HCT116 (cell line): ENCODE measurements at regions of chr10 and their contacts with region 1.

Region 1: DNA sequence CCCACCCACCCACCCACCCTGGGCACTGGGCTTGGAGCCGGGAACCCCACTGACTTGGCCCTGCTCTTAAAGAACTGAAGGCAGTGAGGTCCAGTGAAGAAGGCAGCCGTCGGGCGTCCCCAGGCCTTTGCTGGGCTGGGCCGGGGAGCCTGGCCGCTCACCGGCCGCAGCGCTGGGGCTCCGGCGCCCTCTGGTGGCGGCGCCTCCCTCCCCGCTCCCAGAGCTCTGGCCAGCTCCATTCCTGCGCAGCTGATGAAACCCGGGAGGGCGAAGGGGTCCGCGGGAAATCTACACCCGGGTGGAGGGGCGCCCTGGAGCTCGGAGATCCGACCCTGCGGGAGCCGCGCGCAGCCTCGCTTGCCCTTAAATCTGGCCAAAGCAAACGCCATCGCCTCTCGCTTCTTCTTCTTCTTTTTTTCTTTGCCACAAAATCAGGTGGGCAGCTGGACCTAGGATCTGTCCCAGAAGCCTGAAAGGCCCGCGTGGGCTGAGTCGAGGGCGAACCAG is 1.7 kb upstream of the CXCL12 start:
- DNase-seq: no peak
- ATAC-seq: peak; percentile 96
- H3K4me3 ChIP-seq: no peak overlapping the region
- H3K27ac ChIP-seq: no peak overlapping the region
- H3K4me1 ChIP-seq: no peaks in the 10 kb centered on the region
- H3K27me3 ChIP-seq: 0 out of 2 replicates have a peak, but pooled peaks cover 2% of the 10 kb centered on the region
- CTCF ChIP-seq: peak; percentile 62 to 93 (median 74)
- POLR2A ChIP-seq: no peak
- RAD21 ChIP-seq: peak; percentile 82

Region 2: GRCh38 chr10:43689955-43690771 is 696.4 kb before region 1 on chr10:
- CTCF ChIA-PET with region 1: interaction called, 10 read pairs
- POLR2A ChIA-PET with region 1: no interaction called
- RAD21 ChIA-PET with region 1: no interaction called
- intact Hi-C with region 1: no loop called
- DNase-seq: peak; percentile 29
- ATAC-seq: peak; percentile 99
- H3K4me3 ChIP-seq: no peak overlapping the region
- H3K27ac ChIP-seq: no peak overlapping the region
- H3K4me1 ChIP-seq: peaks cover 0 to 7% of the 10 kb centered on the region in 2 experiments; a peak in 1 of 4 replicates
- H3K27me3 ChIP-seq: 0 out of 2 replicates have a peak, but pooled peaks cover 18% of the 10 kb centered on the region
- CTCF ChIP-seq: peak; percentile 60 to 90 (median 77)
- POLR2A ChIP-seq: no peak
- RAD21 ChIP-seq: peak; percentile 70

Region 3: GRCh38 chr10:44857363-44858016 is 470.9 kb after region 1 on chr10:
- CTCF ChIA-PET with region 1: interaction called, 11 read pairs
- POLR2A ChIA-PET with region 1: no interaction called
- RAD21 ChIA-PET with region 1: interaction called in 1 of 2 experiments, 3 read pairs
- intact Hi-C with region 1: loop called (anchors 10 kb)
- DNase-seq: no peak
- ATAC-seq: peak; percentile 77
- H3K4me3 ChIP-seq: no peak overlapping the region
- H3K27ac ChIP-seq: no peak overlapping the region
- H3K4me1 ChIP-seq: no peaks in the 10 kb centered on the region
- H3K27me3 ChIP-seq: no peaks in the 10 kb centered on the region
- CTCF ChIP-seq: peak; percentile 41 to 99 (median 98); a peak in 5 of 6 replicates
- POLR2A ChIP-seq: no peak
- RAD21 ChIP-seq: peak; percentile 77

Region 4: GRCh38 chr10:44864637-44865288 is 478.2 kb after region 1 on chr10:
- CTCF ChIA-PET with region 1: interaction called, 3 read pairs
- POLR2A ChIA-PET with region 1: no interaction called
- RAD21 ChIA-PET with region 1: interaction called in 1 of 2 experiments, 3 read pairs
- intact Hi-C with region 1: loop called (anchors 10 kb)
- DNase-seq: peak; percentile 60
- ATAC-seq: peak; percentile 96
- H3K4me3 ChIP-seq: peak overlapping the region; percentile 40 to 51
- H3K27ac ChIP-seq: no peak overlapping the region; the same call in 1 of the 2 replicates
- H3K4me1 ChIP-seq: peaks cover 10 to 18% of the 10 kb centered on the region in 2 experiments
- H3K27me3 ChIP-seq: peaks cover 7% of the 10 kb centered on the region; the same call in 1 of the 2 replicates
- CTCF ChIP-seq: peak; percentile 82 to 98 (median 97)
- POLR2A ChIP-seq: no peak
- RAD21 ChIP-seq: peak; percentile 80

Region 5: GRCh38 chr10:44898635-44899034 is 512.0 kb after region 1 on chr10:
- CTCF ChIA-PET with region 1: no interaction called
- POLR2A ChIA-PET with region 1: no interaction called
- RAD21 ChIA-PET with region 1: no interaction called
- intact Hi-C with region 1: no loop called
- DNase-seq: no peak
- ATAC-seq: no peak
- H3K4me3 ChIP-seq: no peak overlapping the region
- H3K27ac ChIP-seq: no peak overlapping the region
- H3K4me1 ChIP-seq: no peaks in the 10 kb centered on the region
- H3K27me3 ChIP-seq: peaks cover 10% of the 10 kb centered on the region; the same call in 1 of the 2 replicates
- CTCF ChIP-seq: no peak
- POLR2A ChIP-seq: no peak
- RAD21 ChIP-seq: no peak